PC-9 (cell line): ENCODE measurements at regions of chr15 and their contacts with region 1.

Region 1: GRCh38 chr15:74373731-74374647 is 6.5 kb upstream of the CYP11A1 start:
- DNase-seq: peak; percentile 73 to 91
- H3K4me3 ChIP-seq: peak overlapping the region; percentile 67
- H3K27ac ChIP-seq: no peak overlapping the region
- H3K4me1 ChIP-seq: peaks cover 22% of the 10 kb centered on the region
- H3K27me3 ChIP-seq: no peaks in the 10 kb centered on the region
- CTCF ChIP-seq: peak; percentile 81

Region 2: DNA sequence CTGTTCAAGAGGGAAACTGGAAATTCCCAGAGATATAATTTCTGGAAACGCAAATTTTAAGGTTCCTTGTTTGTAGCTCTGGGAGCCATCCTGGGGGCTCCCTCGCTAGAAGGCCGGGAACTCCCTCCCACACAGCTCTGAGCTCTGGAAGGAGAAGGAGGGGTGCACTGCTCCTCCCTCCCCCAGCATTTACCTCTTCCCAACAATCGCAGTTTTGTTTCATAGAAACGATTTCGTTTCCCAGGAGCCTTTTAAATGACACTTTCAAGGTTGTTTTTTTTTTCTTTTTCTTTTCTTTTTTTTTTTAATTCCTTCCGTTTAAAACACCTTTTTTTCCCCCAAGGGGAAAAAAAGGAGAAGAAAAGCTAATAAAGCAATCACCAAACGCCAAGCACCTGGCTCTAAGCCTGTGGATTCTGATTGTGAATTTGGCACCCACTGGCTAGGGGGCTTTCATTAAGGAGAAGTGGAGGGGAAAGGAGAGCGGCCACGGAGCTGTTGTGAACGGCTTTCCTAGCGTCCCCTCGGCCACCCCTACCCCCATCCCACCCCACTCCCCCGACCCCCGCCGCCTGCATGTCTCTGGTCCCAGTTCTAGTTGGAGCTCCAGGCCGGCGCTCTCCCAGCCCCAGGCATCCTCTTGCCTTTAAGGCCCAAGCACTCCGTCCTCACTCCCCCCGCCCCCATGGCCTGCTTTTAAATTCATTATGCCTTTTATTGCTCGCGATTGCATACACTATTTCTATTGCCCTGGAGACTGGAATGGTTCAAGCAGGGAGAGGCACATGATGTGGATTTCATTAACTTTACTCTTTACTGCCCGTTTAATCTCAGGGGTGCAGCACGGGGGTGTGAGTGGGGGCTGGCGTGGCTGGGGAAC is 151.5 kb before region 1 on chr15:
- CTCF ChIA-PET with region 1: no interaction called
- POLR2A ChIA-PET with region 1: no interaction called
- intact Hi-C with region 1: no loop called
- DNase-seq: no peak
- H3K4me3 ChIP-seq: no peak overlapping the region
- H3K27ac ChIP-seq: no peak overlapping the region
- H3K4me1 ChIP-seq: peaks cover 18% of the 10 kb centered on the region
- H3K27me3 ChIP-seq: no peaks in the 10 kb centered on the region
- CTCF ChIP-seq: no peak

Region 3: DNA sequence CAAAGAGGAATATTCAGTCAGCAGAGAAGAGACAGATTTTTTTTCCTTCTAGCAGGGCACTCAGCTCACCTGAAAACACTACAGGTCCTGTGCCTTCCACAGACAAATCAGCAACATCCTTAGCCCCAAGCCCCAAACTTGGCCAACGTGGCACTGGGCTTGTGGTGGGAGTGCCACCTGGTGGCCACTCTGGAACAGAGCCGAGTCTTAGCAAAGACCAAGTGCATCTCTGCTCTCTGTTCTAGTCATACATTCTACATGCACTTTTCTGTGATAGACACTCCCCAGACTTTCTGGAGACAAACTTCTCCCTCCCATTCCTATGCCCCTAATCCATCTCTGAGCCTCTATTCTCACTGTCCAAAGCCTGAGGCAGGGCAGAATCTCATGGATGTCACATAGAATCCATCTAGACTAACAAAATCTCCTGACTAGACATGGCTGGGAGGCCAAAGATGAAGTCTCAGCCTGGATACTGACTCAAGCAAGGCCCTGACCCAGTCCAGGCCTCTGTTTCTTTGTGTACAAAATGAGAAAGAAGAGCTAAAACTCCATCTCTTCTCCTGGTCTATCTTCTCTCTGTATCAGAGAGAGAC is 64.8 kb after region 1 on chr15:
- CTCF ChIA-PET with region 1: interaction called, 4 read pairs
- POLR2A ChIA-PET with region 1: no interaction called
- intact Hi-C with region 1: loop called (anchors 2 kb)
- DNase-seq: peak; percentile 66 to 78
- H3K4me3 ChIP-seq: no peak overlapping the region
- H3K27ac ChIP-seq: no peak overlapping the region
- H3K4me1 ChIP-seq: 0 out of 2 replicates have a peak, but pooled peaks cover 6% of the 10 kb centered on the region
- H3K27me3 ChIP-seq: no peaks in the 10 kb centered on the region
- CTCF ChIP-seq: peak; percentile 87

Region 4: DNA sequence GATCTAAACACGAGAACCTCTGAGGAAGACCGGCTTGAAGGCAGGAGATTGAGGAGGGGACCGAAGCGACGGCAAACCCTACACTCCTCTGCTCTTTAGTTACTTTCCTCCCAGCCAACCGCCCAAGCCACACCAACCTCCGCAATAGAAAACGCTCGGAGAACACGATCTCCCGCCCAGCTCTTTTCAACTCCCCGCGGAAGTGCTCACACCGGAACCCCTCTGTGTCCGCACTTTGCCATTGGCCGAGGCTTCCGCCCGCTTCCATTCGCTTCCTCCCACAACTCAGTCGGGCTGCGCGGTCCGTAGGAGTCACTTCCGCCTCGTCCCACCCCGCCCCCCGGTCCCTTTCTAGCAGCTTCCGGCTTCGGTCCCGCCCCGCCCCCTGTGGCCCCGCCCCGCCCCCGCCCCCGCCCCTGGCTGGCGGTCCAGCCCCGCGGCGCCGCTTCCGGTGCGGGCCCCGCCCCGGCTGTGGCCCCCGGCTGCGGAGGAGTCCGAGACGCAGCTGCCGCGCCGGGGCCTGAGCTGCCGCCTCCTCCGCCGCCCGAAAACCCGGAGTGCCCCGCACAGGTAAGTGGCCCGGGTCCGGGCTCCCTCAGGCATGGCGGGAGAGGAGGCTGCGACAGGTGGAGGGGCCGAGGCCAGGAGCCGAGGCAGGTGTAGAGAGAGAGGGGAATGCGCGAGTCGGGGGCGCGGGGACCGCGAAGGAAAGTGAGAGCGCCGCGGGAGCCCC is 166.9 kb after region 1 on chr15 and contains the start of gene ARID3B:
- CTCF ChIA-PET with region 1: interaction called, 8 read pairs
- POLR2A ChIA-PET with region 1: interaction called, 3 read pairs
- intact Hi-C with region 1: loop called (anchors 2 kb)
- DNase-seq: peak; percentile 92 to 94
- H3K4me3 ChIP-seq: peak within 1 kb of the TSS; percentile 98
- H3K27ac ChIP-seq: peak within 1 kb of the TSS; percentile 52
- H3K4me1 ChIP-seq: peaks cover 13% of the 10 kb centered on the region
- H3K27me3 ChIP-seq: no peaks in the 10 kb centered on the region
- CTCF ChIP-seq: no peak
- total RNA-seq, gene ARID3B: 9.6 and 10.8 TPM in 2 replicates

Region 5: GRCh38 chr15:74635228-74635627 is 261.2 kb after region 1 on chr15:
- CTCF ChIA-PET with region 1: interaction called, 11 read pairs
- POLR2A ChIA-PET with region 1: no interaction called
- intact Hi-C with region 1: loop called (anchors 1 kb)
- DNase-seq: peak in 1 of 2 experiments; percentile 58
- H3K4me3 ChIP-seq: no peak overlapping the region
- H3K27ac ChIP-seq: no peak overlapping the region
- H3K4me1 ChIP-seq: no peaks in the 10 kb centered on the region
- H3K27me3 ChIP-seq: no peaks in the 10 kb centered on the region
- CTCF ChIP-seq: peak; percentile 94